Spleen (tissue), 13 donors: ENCODE measurements at regions of chr2 and their contacts with region 1.

Region 1: DNA sequence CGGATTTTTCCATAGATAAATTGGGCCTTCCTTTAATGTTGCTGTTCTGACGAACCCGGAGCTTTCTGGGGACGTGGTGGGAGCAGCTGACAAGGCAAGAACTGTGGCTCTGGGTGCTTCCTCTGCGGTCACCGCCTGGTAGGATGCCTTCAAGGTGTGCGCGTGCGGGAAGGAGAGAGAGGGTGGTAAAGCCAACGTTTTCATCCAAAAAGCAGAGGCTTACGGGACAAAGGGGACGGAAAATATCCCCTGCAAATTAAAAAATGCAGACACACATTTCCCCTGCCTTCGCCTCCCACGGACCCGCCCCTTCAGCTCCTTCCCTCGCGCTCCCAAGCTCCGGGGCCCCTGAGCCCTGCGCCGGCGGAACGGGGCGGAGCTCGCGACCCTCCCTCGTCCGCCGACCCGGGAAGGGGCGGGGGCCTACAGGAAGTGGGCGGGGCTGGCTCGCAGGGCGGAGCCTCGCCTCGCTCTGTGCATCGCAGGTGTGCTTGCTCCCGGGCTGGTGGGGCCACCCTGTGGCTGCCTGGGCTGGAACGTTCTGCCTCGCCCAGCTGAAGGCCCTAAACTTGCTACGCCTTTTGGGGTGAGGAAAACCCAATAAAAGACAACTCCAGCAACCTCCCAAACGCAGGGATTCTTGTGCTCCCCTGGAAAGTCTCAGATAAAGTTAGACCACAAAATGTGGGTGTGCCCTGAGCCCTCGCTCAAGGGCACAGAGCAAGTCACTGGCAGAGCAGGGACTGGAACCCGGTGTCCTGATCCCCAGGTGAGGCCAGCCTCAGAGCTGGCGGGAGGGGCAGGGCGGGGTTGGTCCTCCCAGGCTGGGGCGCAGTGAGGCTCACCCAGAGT is 25.4 kb upstream of the SLC66A3 start:
- DNase-seq: peak; percentile 94
- H3K4me3 ChIP-seq: peak overlapping the region; percentile 23 to 68 (median 34)
- H3K27ac ChIP-seq: peak overlapping the region; percentile 61 to 86 (median 74)
- H3K4me1 ChIP-seq: peaks cover 18 to 70% (median 49%) of the 10 kb centered on the region in 6 donors
- H3K27me3 ChIP-seq: peaks cover 0 to 18% (median 0%) of the 10 kb centered on the region in 7 donors
- CTCF ChIP-seq: peak in 7 of 11 experiments; percentile 43 to 62 (median 54)
- POLR2A ChIP-seq: no peak

Region 2: DNA sequence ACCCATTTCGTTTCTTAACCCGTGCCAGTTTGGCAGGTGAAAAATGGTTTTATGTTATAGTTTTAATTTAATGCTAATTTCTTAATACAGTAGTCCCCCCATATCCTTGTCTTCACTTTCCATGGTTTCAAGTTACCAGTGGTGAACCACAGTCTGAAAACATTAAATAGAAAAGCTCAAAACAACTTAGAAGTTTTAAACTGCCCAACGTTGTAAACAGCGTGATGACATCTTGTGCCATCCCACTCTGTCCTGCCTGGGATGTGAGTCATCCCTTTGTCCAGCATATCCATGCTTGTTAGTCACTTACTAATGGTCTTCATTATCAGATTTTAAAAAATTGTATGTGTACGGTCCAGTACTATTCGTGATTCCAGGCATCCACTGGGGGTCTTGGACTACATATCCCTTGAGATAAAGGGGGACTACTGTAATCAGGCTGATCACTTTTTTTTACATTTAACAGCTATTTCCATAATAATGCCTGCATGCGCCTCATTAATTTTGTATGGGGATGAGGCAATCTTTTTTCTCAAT is 57.3 kb after region 1 on chr2:
- intact Hi-C with region 1: no loop called
- DNase-seq: no peak
- H3K4me3 ChIP-seq: no peak overlapping the region
- H3K27ac ChIP-seq: no peak overlapping the region
- H3K4me1 ChIP-seq: peaks cover 0 to 4% (median 0%) of the 10 kb centered on the region in 6 donors
- H3K27me3 ChIP-seq: no peaks in the 10 kb centered on the region
- CTCF ChIP-seq: no peak
- POLR2A ChIP-seq: no peak

Region 3: DNA sequence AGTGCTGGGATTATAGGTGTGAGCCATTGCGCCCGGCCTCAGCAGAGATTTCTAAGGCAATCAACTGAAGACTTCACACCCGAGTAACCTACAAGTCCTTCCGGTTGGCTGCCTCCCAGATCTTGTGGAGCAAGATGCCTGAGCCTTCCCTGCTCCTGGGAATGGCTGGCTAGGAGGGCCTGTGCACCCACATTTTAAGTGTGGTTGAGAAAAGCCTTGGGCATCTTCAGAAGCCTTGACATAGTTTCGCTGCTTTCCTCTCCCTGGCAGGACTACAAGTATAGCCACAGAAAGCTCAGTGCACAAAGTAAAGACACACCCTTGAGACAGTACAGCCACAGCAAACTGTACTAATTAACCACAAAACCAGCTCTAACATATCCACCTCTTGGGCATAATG is 300.9 kb after region 1 on chr2:
- intact Hi-C with region 1: no loop called
- DNase-seq: no peak
- H3K4me3 ChIP-seq: no peak overlapping the region
- H3K27ac ChIP-seq: no peak overlapping the region
- H3K4me1 ChIP-seq: no peaks in the 10 kb centered on the region
- H3K27me3 ChIP-seq: no peaks in the 10 kb centered on the region
- CTCF ChIP-seq: no peak
- POLR2A ChIP-seq: no peak

Region 4: GRCh38 chr2:11446733-11447248 is 317.0 kb after region 1 on chr2:
- intact Hi-C with region 1: loop called (anchors 5 kb)
- DNase-seq: no peak
- H3K4me3 ChIP-seq: no peak overlapping the region
- H3K27ac ChIP-seq: no peak overlapping the region
- H3K4me1 ChIP-seq: no peaks in the 10 kb centered on the region
- H3K27me3 ChIP-seq: no peaks in the 10 kb centered on the region
- CTCF ChIP-seq: peak; percentile 43 to 85 (median 75)
- POLR2A ChIP-seq: no peak

Region 5: GRCh38 chr2:11583840-11584524 is 454.2 kb after region 1 on chr2:
- intact Hi-C with region 1: loop called (anchors 10 kb)
- DNase-seq: peak; percentile 80
- H3K4me3 ChIP-seq: no peak overlapping the region
- H3K27ac ChIP-seq: no peak overlapping the region
- H3K4me1 ChIP-seq: no peaks in the 10 kb centered on the region
- H3K27me3 ChIP-seq: peaks cover 0 to 36% (median 0%) of the 10 kb centered on the region in 7 donors
- CTCF ChIP-seq: peak; percentile 24 to 76 (median 63)
- POLR2A ChIP-seq: no peak

Region 6: GRCh38 chr2:11681722-11682589 is 552.1 kb after region 1 on chr2:
- intact Hi-C with region 1: no loop called
- DNase-seq: peak; percentile 75
- H3K4me3 ChIP-seq: no peak overlapping the region
- H3K27ac ChIP-seq: no peak overlapping the region
- H3K4me1 ChIP-seq: no peaks in the 10 kb centered on the region
- H3K27me3 ChIP-seq: peaks cover 0 to 46% (median 20%) of the 10 kb centered on the region in 7 donors
- CTCF ChIP-seq: peak; percentile 35 to 79 (median 55)
- POLR2A ChIP-seq: no peak